B cell (primary cell): ENCODE measurements at regions of chr11 and their contacts with region 1.

Region 1: GRCh38 chr11:46121724-46122477 is 647 bp upstream of the PHF21A start:
- DNase-seq: peak; percentile 91
- ATAC-seq: peak; percentile 47
- H3K4me3 ChIP-seq: peak overlapping the region; percentile 38 to 89 (median 78)
- H3K4me3 Mint-ChIP-seq: peak overlapping the region; percentile 93
- H3K27ac ChIP-seq: peak overlapping the region in 1 of 2 donors; percentile 61
- H3K27ac Mint-ChIP-seq: peak overlapping the region; percentile 97
- H3K4me1 ChIP-seq: peaks cover 21 to 22% of the 10 kb centered on the region in 2 donors
- H3K4me1 Mint-ChIP-seq: peaks cover 29% of the 10 kb centered on the region
- H3K27me3 ChIP-seq: no peaks in the 10 kb centered on the region
- H3K27me3 Mint-ChIP-seq: no peaks in the 10 kb centered on the region
- CTCF ChIP-seq: no peak

Region 2: DNA sequence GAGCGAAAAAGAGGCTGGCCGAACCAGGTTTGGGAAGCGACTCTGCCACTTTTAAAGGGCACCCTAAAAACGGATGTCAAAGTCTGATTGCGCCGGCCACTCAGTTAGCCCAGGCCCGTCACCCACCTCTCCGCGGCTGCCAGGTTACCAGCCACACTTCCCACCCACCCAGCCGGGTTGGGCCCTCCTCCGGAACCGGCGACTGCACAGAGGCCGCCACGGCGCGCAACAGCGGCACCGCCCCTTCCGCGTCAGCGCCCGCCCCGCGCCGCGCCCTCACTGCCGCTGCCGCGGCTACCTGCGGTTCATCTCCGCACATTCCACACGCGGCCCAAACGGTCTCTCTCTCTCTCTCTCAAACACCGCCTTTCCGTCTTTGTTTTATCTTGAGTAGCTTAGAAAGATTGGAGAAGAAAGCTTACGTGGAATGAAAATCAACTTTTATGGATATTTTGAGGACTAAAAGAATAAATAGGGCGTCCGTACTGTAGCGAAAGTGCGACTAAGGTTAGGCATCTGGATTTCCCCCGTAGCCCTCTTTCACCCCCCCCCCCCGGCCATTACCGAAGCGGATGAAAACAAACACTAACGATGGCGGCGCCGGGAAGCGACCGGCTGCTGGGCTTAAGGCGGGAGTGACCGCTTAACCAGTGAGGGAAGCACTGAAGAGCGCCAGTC is 495.2 kb after region 1 on chr11 and contains the starts of genes ATG13 and HARBI1:
- CTCF ChIA-PET with region 1: no interaction called
- POLR2A ChIA-PET with region 1: no interaction called
- intact Hi-C with region 1: loop called (anchors 5 kb)
- DNase-seq: peak; percentile 96
- ATAC-seq: peak; percentile 94
- H3K4me3 ChIP-seq: peak within 1 kb of the TSS; percentile 84 to 100 (median 100)
- H3K4me3 Mint-ChIP-seq: peak within 1 kb of the TSS; percentile 99
- H3K27ac ChIP-seq: peak within 1 kb of the TSS; percentile 99 to 100
- H3K27ac Mint-ChIP-seq: peak within 1 kb of the TSS; percentile 100
- H3K4me1 ChIP-seq: peaks cover 17 to 22% of the 10 kb centered on the region in 2 donors
- H3K4me1 Mint-ChIP-seq: peaks cover 30% of the 10 kb centered on the region
- H3K27me3 ChIP-seq: no peaks in the 10 kb centered on the region
- H3K27me3 Mint-ChIP-seq: no peaks in the 10 kb centered on the region
- CTCF ChIP-seq: no peak
- total RNA-seq, gene ATG13: 88.8 and 92.8 TPM in 2 replicates
- total RNA-seq, gene HARBI1: 6.7 and 8.0 TPM in 2 replicates